Colonic mucosa (tissue), 4 donors: ENCODE measurements at regions of chr13 and their contacts with region 1.

Region 1: DNA sequence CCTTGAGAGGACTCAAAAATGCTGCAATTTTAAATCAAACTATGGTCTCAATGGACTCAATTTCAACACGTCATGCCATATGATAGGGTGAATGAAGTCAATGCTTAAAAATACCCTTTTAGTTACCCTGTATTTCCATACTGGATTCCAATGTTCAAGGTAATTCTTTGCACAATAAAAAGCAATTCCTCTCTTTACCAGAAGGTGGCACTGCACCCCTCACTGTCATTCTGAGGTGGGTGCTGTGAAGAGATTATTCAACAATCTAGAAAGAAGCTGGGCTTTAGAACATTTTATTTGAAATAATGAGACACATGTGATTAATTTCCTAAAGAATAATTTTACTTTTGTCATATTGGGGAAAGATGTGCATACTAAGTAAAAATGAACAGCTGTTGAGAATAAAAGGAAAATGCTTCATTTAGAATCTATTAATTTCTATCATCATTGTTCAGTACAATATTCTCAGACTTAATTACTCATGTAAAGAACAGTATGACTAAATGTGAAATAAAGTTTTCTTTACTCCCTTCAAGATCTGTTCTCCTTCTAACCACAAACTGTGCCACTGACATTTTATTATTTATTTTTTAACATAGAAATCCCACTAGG is 789.1 kb downstream of the GPC5 start:
- DNase-seq: peak; percentile 28
- H3K4me3 ChIP-seq: no peak overlapping the region
- H3K27ac ChIP-seq: no peak overlapping the region
- H3K4me1 ChIP-seq: no peaks in the 10 kb centered on the region
- H3K27me3 ChIP-seq: no peaks in the 10 kb centered on the region
- CTCF ChIP-seq: peak; percentile 92

Region 2: DNA sequence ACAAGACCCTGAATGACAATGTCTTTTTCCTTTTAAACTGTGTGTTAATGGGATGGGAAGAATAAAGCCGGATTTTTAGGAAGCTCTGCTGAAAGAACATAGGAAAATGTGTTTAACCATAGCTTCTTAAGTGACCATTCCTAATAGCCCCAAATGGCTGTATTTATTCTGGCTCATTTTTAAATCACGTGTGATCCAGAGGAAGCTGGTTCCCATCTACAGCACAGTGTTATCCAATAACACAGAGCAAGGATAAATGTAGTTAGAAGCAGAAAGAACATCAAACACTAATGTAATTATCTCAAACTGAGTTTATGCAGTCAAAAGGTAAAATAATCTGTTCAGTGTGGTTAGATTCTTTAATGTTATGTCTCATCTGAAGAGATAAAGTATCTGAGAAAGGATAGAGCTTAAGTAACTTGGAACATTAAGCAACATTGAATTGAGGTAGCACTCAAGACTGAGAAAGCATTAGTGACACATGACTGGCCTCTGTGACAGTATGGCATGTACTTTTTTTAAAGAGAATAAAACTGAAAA is 64.3 kb after region 1 on chr13:
- intact Hi-C with region 1: no loop called
- DNase-seq: no peak
- H3K4me3 ChIP-seq: no peak overlapping the region
- H3K27ac ChIP-seq: no peak overlapping the region
- H3K4me1 ChIP-seq: no peaks in the 10 kb centered on the region
- H3K27me3 ChIP-seq: no peaks in the 10 kb centered on the region
- CTCF ChIP-seq: no peak

Region 3: DNA sequence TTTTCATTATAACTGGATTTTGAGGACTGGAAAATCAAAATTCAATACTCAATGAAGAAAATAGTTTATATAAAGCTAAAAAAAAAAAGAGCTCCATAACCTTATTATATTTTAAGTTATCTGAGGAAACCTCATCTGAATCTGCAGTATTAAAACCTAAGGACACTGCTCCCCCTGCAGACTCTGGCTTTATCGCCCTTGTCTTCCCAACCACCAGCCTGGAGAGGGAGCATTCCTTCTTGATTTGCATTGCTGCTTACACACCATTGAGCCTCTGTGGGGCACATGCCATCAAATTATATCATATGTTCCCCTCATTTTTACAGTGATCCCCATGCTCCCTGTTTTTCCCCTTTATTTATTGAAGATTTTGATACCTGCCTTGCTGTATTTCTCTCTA is 167.7 kb after region 1 on chr13:
- intact Hi-C with region 1: loop called (anchors 5 kb)
- DNase-seq: peak; percentile 27
- H3K4me3 ChIP-seq: no peak overlapping the region
- H3K27ac ChIP-seq: no peak overlapping the region
- H3K4me1 ChIP-seq: no peaks in the 10 kb centered on the region
- H3K27me3 ChIP-seq: no peaks in the 10 kb centered on the region
- CTCF ChIP-seq: no peak